ENCODE measurements at regions of chr9 and their contacts with region 1.

Region 1: DNA sequence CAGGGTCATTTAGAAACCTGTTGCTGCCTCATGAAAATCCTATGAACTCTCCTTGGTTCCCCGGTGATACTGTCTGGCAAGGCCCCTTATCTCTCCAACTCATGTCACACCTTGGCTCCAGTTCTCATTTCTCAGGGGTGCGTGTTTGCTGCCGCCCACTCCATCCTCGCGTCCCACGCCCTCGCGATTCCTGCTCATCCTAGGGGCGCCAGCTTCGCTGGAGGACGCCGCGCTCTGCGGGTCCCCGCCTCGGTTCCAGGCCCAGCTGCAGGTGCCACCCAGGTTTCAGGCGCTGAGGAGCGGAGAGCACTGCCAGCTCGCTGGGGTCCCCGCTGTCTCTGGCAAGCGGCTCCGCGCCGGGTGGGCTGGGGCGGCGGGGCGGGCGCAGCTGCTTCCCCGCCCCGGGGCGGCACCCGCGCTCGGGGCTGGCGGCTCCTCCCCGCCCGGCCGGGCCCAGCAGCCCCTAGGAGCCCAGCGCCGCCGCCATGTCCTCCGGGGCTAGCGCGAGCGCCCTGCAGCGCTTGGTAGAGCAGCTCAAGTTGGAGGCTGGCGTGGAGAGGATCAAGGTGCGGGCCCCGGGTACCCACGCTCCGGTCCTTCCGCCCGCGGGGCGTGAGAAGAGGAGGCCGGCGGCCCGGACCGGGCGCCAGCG is at the start of gene GNG10:
- DNase-seq: peak; percentile 75
- ATAC-seq: peak; percentile 94
- H3K4me3 ChIP-seq: peak within 1 kb of the TSS; percentile 61 to 92 (median 74)
- H3K4me3 Mint-ChIP-seq: peak within 1 kb of the TSS; percentile 99
- H3K27ac ChIP-seq: peak within 1 kb of the TSS; percentile 37 to 51
- H3K27ac Mint-ChIP-seq: peak within 1 kb of the TSS; percentile 91
- H3K4me1 ChIP-seq: peaks cover 11 to 20% of the 10 kb centered on the region in 2 donors
- H3K4me1 Mint-ChIP-seq: peaks cover 29% of the 10 kb centered on the region
- H3K27me3 ChIP-seq: no peaks in the 10 kb centered on the region
- H3K27me3 Mint-ChIP-seq: no peaks in the 10 kb centered on the region
- CTCF ChIP-seq: no peak
- total RNA-seq, gene GNG10: 5.2 and 7.2 TPM in 2 replicates

Region 2: GRCh38 chr9:111483862-111484571 is 177.3 kb before region 1 on chr9 and contains the start of gene ECPAS:
- CTCF ChIA-PET with region 1: no interaction called
- POLR2A ChIA-PET with region 1: no interaction called
- intact Hi-C with region 1: loop called (anchors 1 kb)
- DNase-seq: peak; percentile 83
- ATAC-seq: peak; percentile 60
- H3K4me3 ChIP-seq: peak within 1 kb of the TSS; percentile 68 to 92 (median 86)
- H3K4me3 Mint-ChIP-seq: peak within 1 kb of the TSS; percentile 78
- H3K27ac ChIP-seq: peak within 1 kb of the TSS; percentile 73 to 85
- H3K27ac Mint-ChIP-seq: peak within 1 kb of the TSS; percentile 70
- H3K4me1 ChIP-seq: peaks cover 7 to 9% of the 10 kb centered on the region in 2 donors
- H3K4me1 Mint-ChIP-seq: peaks cover 27% of the 10 kb centered on the region
- H3K27me3 ChIP-seq: peaks cover 0 to 2% (median 0%) of the 10 kb centered on the region in 4 experiments
- H3K27me3 Mint-ChIP-seq: peaks cover 7% of the 10 kb centered on the region
- CTCF ChIP-seq: no peak
- total RNA-seq, gene ECPAS: 66.7 and 69.5 TPM in 2 replicates

Region 3: GRCh38 chr9:111597817-111598729 is 63.2 kb before region 1 on chr9:
- CTCF ChIA-PET with region 1: no interaction called
- POLR2A ChIA-PET with region 1: no interaction called
- intact Hi-C with region 1: loop called (anchors 10 kb)
- DNase-seq: peak; percentile 75
- ATAC-seq: peak; percentile 69
- H3K4me3 ChIP-seq: peak overlapping the region; percentile 39 to 76 (median 59)
- H3K4me3 Mint-ChIP-seq: peak overlapping the region; percentile 87
- H3K27ac ChIP-seq: no peak overlapping the region
- H3K27ac Mint-ChIP-seq: peak overlapping the region; percentile 59
- H3K4me1 ChIP-seq: peaks cover 22 to 23% of the 10 kb centered on the region in 2 donors
- H3K4me1 Mint-ChIP-seq: peaks cover 25% of the 10 kb centered on the region
- H3K27me3 ChIP-seq: peaks cover 0 to 39% (median 20%) of the 10 kb centered on the region in 4 experiments
- H3K27me3 Mint-ChIP-seq: peaks cover 42% of the 10 kb centered on the region
- CTCF ChIP-seq: peak; percentile 76

Region 4: DNA sequence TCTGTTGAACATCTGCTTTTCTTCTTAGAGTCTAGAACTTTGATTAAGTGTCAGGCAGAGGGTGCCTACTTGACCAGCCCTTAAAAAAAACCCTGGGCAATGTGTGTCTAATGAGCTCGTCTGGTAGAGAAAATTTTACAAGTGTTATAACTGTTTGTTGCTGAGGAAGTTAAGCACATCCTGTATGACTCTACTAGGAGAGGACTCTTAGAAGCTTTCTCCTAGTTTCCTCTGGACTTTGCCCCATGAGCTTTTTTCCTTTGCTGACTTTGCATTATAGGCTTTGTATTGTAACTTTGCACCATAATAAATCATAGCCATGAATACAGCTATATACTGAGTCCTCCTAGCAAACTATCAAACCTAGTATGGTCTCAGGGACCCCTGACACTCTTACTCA is 39.5 kb after region 1 on chr9:
- CTCF ChIA-PET with region 1: no interaction called
- POLR2A ChIA-PET with region 1: no interaction called
- intact Hi-C with region 1: no loop called
- DNase-seq: no peak
- ATAC-seq: no peak
- H3K4me3 ChIP-seq: no peak overlapping the region
- H3K4me3 Mint-ChIP-seq: no peak overlapping the region
- H3K27ac ChIP-seq: no peak overlapping the region
- H3K27ac Mint-ChIP-seq: no peak overlapping the region
- H3K4me1 ChIP-seq: no peaks in the 10 kb centered on the region
- H3K4me1 Mint-ChIP-seq: no peaks in the 10 kb centered on the region
- H3K27me3 ChIP-seq: no peaks in the 10 kb centered on the region
- H3K27me3 Mint-ChIP-seq: no peaks in the 10 kb centered on the region
- CTCF ChIP-seq: no peak

Measured in B cell (primary cell).